H1 (cell line): ENCODE measurements at regions of chr2 and their contacts with region 1.

Region 1: GRCh38 chr2:20584637-20585321 is 66.1 kb downstream of the HS1BP3 start:
- DNase-seq: peak; percentile 67 to 79
- H3K4me3 ChIP-seq: peak overlapping the region in 1 of 4 experiments; percentile 27; a peak in 2 of 8 replicates
- H3K27ac ChIP-seq: peak overlapping the region; percentile 12; the same call in 1 of the 2 replicates
- H3K4me1 ChIP-seq: peaks cover 7 to 16% (median 11%) of the 10 kb centered on the region in 4 experiments
- H3K27me3 ChIP-seq: no peaks in the 10 kb centered on the region
- CTCF ChIP-seq: no peak
- EP300 ChIP-seq: no peak
- POLR2A ChIP-seq: peak in 1 of 2 experiments; percentile 56; a peak in 1 of 3 replicates
- RAD21 ChIP-seq: no peak

Region 2: GRCh38 chr2:20561701-20562454 is 22.9 kb before region 1 on chr2:
- CTCF ChIA-PET with region 1: interaction called, 21 read pairs
- POLR2A ChIA-PET with region 1: interaction called, 5 read pairs
- DNase-seq: no peak
- H3K4me3 ChIP-seq: no peak overlapping the region
- H3K27ac ChIP-seq: no peak overlapping the region
- H3K4me1 ChIP-seq: peaks cover 6 to 19% (median 11%) of the 10 kb centered on the region in 4 experiments; a peak in 6 of 7 replicates
- H3K27me3 ChIP-seq: no peaks in the 10 kb centered on the region; a peak in 2 of 7 replicates
- CTCF ChIP-seq: no peak
- EP300 ChIP-seq: no peak
- POLR2A ChIP-seq: no peak
- RAD21 ChIP-seq: no peak

Region 3: GRCh38 chr2:20595431-20596192 is 10.8 kb after region 1 on chr2:
- CTCF ChIA-PET with region 1: interaction called, 53 read pairs
- POLR2A ChIA-PET with region 1: interaction called, 16 read pairs
- DNase-seq: no peak
- H3K4me3 ChIP-seq: no peak overlapping the region
- H3K27ac ChIP-seq: no peak overlapping the region
- H3K4me1 ChIP-seq: peaks cover 4 to 10% (median 5%) of the 10 kb centered on the region in 4 experiments; a peak in 6 of 7 replicates
- H3K27me3 ChIP-seq: peaks cover 0 to 2% (median 0%) of the 10 kb centered on the region in 4 experiments; a peak in 1 of 7 replicates
- CTCF ChIP-seq: no peak
- EP300 ChIP-seq: no peak
- POLR2A ChIP-seq: no peak
- RAD21 ChIP-seq: no peak

Region 4: GRCh38 chr2:20600756-20601325 is 16.1 kb after region 1 on chr2:
- CTCF ChIA-PET with region 1: interaction called, 53 read pairs
- POLR2A ChIA-PET with region 1: interaction called, 16 read pairs
- DNase-seq: no peak
- H3K4me3 ChIP-seq: no peak overlapping the region
- H3K27ac ChIP-seq: no peak overlapping the region
- H3K4me1 ChIP-seq: peaks cover 0 to 1% (median 0%) of the 10 kb centered on the region in 4 experiments; a peak in 3 of 7 replicates
- H3K27me3 ChIP-seq: no peaks in the 10 kb centered on the region
- CTCF ChIP-seq: peak in 2 of 3 experiments; percentile 18 to 25; a peak in 2 of 4 replicates
- EP300 ChIP-seq: no peak
- POLR2A ChIP-seq: no peak
- RAD21 ChIP-seq: peak in 1 of 2 experiments; percentile 25; a peak in 2 of 4 replicates